Activated naive CD4-positive, alpha-beta T cell treated with anti-CD3 and anti-CD28 coated beads for 36 hours (primary cell): ENCODE measurements at regions of chr1 and their contacts with region 1.

Region 1: DNA sequence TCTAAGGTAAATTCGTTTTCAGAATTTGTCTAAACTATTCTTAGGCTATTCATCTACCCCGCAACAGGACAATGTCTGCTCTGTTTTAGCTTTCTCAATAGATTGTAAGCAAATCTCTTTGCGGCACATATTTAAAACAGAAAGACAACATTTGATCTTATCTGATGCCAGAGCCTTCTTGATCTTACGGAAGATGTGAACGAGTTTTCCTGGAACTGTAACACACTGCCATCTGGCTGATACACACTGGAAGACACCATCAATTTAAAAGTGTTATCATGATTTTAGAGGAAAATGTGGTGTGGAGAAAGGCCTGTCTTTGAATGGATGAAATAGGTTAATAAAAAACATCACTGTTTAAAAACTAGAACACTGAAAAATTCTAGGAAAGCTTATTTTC is 36.1 kb downstream of the COA6 start:
- DNase-seq: peak; percentile 47
- H3K4me3 Mint-ChIP-seq: peak overlapping the region; percentile 61
- H3K27ac Mint-ChIP-seq: peak overlapping the region; percentile 95
- H3K4me1 Mint-ChIP-seq: peaks cover 42% of the 10 kb centered on the region
- H3K27me3 Mint-ChIP-seq: no peaks in the 10 kb centered on the region

Region 2: GRCh38 chr1:234212764-234213657 is 196.3 kb before region 1 on chr1:
- CTCF ChIA-PET with region 1: interaction called, 3 read pairs
- intact Hi-C with region 1: loop called (anchors 1 kb)
- DNase-seq: peak; percentile 56
- H3K4me3 Mint-ChIP-seq: no peak overlapping the region
- H3K27ac Mint-ChIP-seq: no peak overlapping the region
- H3K4me1 Mint-ChIP-seq: peaks cover 12% of the 10 kb centered on the region
- H3K27me3 Mint-ChIP-seq: peaks cover 43% of the 10 kb centered on the region

Region 3: GRCh38 chr1:234326497-234327366 is 82.6 kb before region 1 on chr1:
- CTCF ChIA-PET with region 1: interaction called, 10 read pairs
- intact Hi-C with region 1: loop called (anchors 1 kb)
- DNase-seq: peak; percentile 81
- H3K4me3 Mint-ChIP-seq: peak overlapping the region; percentile 75
- H3K27ac Mint-ChIP-seq: peak overlapping the region; percentile 41
- H3K4me1 Mint-ChIP-seq: peaks cover 13% of the 10 kb centered on the region
- H3K27me3 Mint-ChIP-seq: peaks cover 14% of the 10 kb centered on the region

Region 4: GRCh38 chr1:234393190-234393589 is 16.1 kb before region 1 on chr1:
- CTCF ChIA-PET with region 1: interaction called, 8 read pairs
- intact Hi-C with region 1: loop called (anchors 1 kb)
- DNase-seq: peak; percentile 26
- H3K4me3 Mint-ChIP-seq: no peak overlapping the region
- H3K27ac Mint-ChIP-seq: no peak overlapping the region
- H3K4me1 Mint-ChIP-seq: peaks cover 13% of the 10 kb centered on the region
- H3K27me3 Mint-ChIP-seq: no peaks in the 10 kb centered on the region

Region 5: DNA sequence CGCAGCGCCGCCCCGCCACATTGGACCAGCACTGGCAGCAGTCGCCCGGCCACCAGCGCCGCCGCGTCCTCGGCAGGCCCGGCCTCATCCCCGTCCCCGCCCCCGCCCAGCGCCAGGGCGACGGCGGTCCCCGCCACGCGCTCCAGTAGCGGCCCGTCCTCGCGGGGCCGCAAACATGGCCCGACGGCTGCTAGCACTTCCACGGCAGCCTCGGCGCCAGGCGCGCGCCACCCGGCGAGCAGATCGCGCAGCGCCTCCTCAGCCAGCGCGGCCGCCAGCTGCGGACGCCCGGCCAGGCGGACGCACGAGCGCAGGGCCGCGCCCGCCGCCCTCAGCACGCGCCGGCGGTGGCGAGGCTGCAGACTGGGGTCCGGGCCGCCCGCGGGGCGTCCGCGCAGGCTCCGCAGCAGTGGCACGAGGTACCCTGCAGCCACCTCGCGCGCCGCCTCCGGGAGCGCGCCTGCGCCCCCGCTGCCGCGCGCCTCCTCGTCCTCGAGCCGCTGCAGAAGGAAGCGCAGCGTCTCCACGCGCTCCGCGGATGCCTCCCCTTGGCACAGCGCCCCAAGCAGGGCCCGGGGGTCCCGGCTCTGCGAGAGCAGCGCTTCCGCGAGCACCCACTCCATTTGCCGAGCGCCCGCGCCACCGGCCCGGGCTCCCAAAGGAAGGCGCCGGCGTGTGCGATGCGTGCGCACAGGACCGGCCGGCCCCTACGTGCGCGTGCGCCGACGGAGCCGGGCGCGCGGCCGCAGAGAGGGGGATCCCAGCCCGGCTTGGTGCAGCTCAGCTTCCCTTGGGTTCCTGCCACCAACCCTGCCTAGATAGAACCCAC is 69.4 kb after region 1 on chr1 and contains the start of gene TARBP1:
- CTCF ChIA-PET with region 1: no interaction called
- intact Hi-C with region 1: loop called (anchors 2 kb)
- DNase-seq: peak; percentile 77
- H3K4me3 Mint-ChIP-seq: peak within 1 kb of the TSS; percentile 79
- H3K27ac Mint-ChIP-seq: peak within 1 kb of the TSS; percentile 46
- H3K4me1 Mint-ChIP-seq: peaks cover 49% of the 10 kb centered on the region
- H3K27me3 Mint-ChIP-seq: peaks cover 12% of the 10 kb centered on the region
- total RNA-seq, gene TARBP1: 40.2 to 41.6 TPM

Region 6: GRCh38 chr1:234963180-234963903 is 554.0 kb after region 1 on chr1:
- CTCF ChIA-PET with region 1: no interaction called
- intact Hi-C with region 1: loop called (anchors 5 kb)
- DNase-seq: peak; percentile 98
- H3K4me3 Mint-ChIP-seq: peak overlapping the region; percentile 35
- H3K27ac Mint-ChIP-seq: peak overlapping the region; percentile 97
- H3K4me1 Mint-ChIP-seq: peaks cover 72% of the 10 kb centered on the region
- H3K27me3 Mint-ChIP-seq: no peaks in the 10 kb centered on the region